HCT116 (cell line): ENCODE measurements at regions of chr12 and their contacts with region 1.

Region 1: DNA sequence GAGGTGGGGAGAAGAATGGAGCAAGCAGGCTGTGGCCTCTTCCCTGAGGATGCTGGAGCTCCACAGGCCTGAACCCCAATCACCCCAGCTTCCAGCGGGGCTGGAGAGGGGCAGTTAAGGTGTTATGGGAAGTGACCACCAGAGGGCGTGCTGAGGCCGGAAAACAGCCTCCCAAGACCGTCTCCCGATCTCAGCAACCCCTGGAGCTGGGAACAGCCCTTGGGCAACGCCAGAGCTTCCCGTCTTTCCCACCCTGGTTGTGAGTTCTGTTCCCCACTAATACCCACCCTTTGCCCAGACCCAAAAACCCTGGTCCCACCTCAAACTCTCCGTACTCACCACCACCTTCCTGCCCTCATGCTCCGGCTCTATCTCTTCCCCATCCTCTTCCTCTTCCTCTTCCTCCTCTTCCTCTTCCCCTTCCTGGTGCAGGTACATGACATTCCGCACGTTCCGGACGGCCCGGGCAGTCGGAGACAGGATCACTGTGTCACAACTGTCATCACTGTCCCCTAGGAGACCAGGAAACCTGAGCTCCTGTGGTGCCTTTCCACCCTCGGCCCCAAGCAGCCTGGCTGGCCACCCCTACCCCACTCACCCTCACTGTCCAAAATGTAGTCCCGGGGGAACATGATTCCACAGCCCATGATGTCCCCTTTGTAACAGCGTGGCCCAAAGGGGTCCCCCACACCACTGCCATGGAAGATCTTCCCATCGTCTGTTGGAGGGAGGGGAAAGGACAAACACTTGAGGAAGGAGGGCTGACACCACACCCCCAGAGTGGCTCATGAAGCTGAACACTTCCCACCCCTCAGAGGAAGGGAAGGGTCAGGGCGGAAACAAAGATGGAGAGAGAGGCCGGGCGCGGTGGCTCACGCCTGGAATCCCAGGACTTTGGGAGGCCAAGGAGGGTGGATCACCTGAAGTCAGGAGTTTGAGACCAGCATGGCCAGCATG is 12.9 kb downstream of the SPRYD3 start:
- DNase-seq: peak; percentile 60
- ATAC-seq: peak; percentile 73
- H3K4me3 ChIP-seq: peak overlapping the region in 1 of 2 experiments; percentile 18; a peak in 2 of 4 replicates
- H3K27ac ChIP-seq: peak overlapping the region; percentile 67
- H3K4me1 ChIP-seq: peaks cover 18 to 52% of the 10 kb centered on the region in 2 experiments
- H3K27me3 ChIP-seq: no peaks in the 10 kb centered on the region
- CTCF ChIP-seq: peak; percentile 76 to 82 (median 82)
- POLR2A ChIP-seq: no peak
- RAD21 ChIP-seq: peak; percentile 97

Region 2: GRCh38 chr12:51773145-51773867 is 1292.9 kb before region 1 on chr12:
- CTCF ChIA-PET with region 1: no interaction called
- POLR2A ChIA-PET with region 1: no interaction called
- RAD21 ChIA-PET with region 1: no interaction called
- intact Hi-C with region 1: no loop called
- DNase-seq: peak; percentile 10
- ATAC-seq: no peak
- H3K4me3 ChIP-seq: no peak overlapping the region
- H3K27ac ChIP-seq: no peak overlapping the region
- H3K4me1 ChIP-seq: peaks cover 2 to 8% of the 10 kb centered on the region in 2 experiments; a peak in 2 of 4 replicates
- H3K27me3 ChIP-seq: no peaks in the 10 kb centered on the region
- CTCF ChIP-seq: no peak
- POLR2A ChIP-seq: no peak
- RAD21 ChIP-seq: no peak

Region 3: DNA sequence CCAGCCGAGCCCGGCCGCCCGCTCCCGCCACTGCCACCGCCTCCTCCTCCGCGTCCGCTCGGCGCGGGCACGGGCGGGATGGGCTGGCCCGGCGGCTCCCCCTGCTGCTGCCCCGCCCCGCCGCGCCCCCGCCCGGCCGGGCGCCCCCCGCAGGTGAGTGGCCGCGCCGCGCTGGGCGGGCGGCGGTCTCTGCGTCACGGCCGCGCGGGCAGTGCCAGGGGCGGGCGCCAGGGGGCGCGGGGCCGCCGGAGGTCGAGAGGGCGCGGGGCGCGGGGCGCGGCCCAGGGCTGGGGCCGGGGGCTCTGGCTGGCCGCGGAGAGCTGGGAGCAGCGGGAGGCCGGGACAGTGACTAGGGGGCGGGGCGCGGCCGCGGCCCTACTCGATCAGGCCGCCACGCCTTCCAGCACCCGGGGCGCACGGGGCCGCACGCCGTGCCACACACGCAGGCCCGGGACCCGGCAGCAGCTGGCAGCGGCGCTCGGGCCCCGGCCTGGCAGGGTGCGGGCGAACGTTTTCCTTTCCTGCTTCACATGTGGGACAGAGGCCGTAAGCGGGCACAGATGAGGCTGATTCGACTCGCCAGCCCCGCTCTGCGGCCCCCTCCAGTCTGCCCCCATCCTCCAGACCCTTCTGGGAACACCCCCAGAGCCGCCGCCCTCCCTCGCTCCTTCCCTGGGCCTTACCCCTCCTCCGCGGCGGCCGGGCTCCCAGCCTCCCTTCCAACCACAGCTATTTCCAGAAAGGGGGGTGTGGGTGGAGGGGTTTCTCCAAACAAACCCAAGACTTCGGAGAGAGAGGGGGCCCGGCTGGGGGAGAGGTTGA is 18.8 kb before region 1 on chr12:
- CTCF ChIA-PET with region 1: interaction called, 36 read pairs
- POLR2A ChIA-PET with region 1: interaction called, 4 read pairs
- RAD21 ChIA-PET with region 1: interaction called, 5 to 7 read pairs
- intact Hi-C with region 1: no loop called
- DNase-seq: no peak
- ATAC-seq: peak; percentile 60
- H3K4me3 ChIP-seq: peak overlapping the region; percentile 81 to 83
- H3K27ac ChIP-seq: peak overlapping the region; percentile 97
- H3K4me1 ChIP-seq: peaks cover 66 to 89% of the 10 kb centered on the region in 2 experiments
- H3K27me3 ChIP-seq: no peaks in the 10 kb centered on the region
- CTCF ChIP-seq: no peak
- POLR2A ChIP-seq: peak; percentile 24
- RAD21 ChIP-seq: no peak

Region 4: DNA sequence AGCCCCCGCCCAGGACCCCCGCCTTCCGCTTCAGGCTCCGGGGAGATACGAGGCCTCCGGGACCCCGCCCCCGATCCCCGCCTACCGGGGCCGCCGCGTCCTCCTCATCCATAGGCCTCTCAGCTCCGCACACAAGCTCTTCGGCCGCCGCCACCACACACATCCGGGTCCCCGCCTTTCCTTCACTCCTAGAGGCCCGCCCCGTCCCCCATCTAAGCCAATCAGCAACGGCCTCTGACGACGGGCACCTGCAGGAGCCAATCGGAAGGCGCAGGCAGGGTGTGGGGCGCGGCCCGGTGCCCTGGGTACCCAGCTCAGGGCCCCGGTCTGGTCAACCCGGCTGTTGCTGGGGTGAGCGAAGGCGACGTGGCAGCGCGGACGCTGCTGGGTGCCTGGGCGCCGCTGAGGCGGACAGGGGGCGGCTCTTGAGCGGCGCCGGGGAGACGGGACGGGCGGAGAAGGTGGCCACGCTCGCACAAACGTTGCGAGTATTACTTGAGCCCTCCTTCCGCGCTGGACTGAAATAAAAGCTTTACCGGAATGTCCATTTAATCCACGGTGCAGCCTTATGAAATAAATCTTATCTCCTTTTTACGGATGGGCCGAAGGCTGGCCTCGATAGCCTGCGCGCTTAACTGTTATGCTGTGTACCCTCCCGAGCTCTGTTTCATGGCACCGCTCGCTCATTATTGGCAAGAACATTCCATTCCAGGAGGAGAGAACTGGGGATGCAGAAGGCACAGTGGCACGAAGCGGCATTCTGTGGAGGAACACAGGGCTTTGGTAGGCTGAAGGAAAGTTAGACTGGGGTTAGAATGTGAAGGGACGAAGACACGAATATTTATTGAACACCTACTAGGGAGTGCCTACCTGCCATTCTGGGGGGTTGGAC is 13.2 kb after region 1 on chr12 and contains the start of gene SPRYD3:
- CTCF ChIA-PET with region 1: interaction called, 33 read pairs
- POLR2A ChIA-PET with region 1: interaction called, 9 read pairs
- RAD21 ChIA-PET with region 1: interaction called, 3 to 6 read pairs
- intact Hi-C with region 1: no loop called
- DNase-seq: peak; percentile 89
- ATAC-seq: peak; percentile 98
- H3K4me3 ChIP-seq: peak within 1 kb of the TSS; percentile 67 to 81
- H3K27ac ChIP-seq: peak within 1 kb of the TSS; percentile 72
- H3K4me1 ChIP-seq: peaks cover 9 to 25% of the 10 kb centered on the region in 2 experiments
- H3K27me3 ChIP-seq: no peaks in the 10 kb centered on the region
- CTCF ChIP-seq: no peak
- POLR2A ChIP-seq: peak; percentile 83
- RAD21 ChIP-seq: no peak
- total RNA-seq, gene SPRYD3: 47.5 TPM

Region 5: GRCh38 chr12:53159195-53159839 is 93.1 kb after region 1 on chr12:
- CTCF ChIA-PET with region 1: interaction called, 23 read pairs
- POLR2A ChIA-PET with region 1: no interaction called
- RAD21 ChIA-PET with region 1: interaction called, 3 to 8 read pairs
- intact Hi-C with region 1: loop called (anchors 1 kb)
- DNase-seq: peak; percentile 72
- ATAC-seq: peak; percentile 96
- H3K4me3 ChIP-seq: peak overlapping the region; percentile 16 to 30; a peak in 3 of 4 replicates
- H3K27ac ChIP-seq: peak overlapping the region; percentile 3; the same call in 1 of the 2 replicates
- H3K4me1 ChIP-seq: peaks cover 3 to 15% of the 10 kb centered on the region in 2 experiments; a peak in 3 of 4 replicates
- H3K27me3 ChIP-seq: no peaks in the 10 kb centered on the region
- CTCF ChIP-seq: peak; percentile 94 to 100 (median 99)
- POLR2A ChIP-seq: no peak
- RAD21 ChIP-seq: peak; percentile 77

Region 6: GRCh38 chr12:53190108-53190729 is 124.0 kb after region 1 on chr12:
- CTCF ChIA-PET with region 1: interaction called, 17 read pairs
- POLR2A ChIA-PET with region 1: interaction called, 3 read pairs
- RAD21 ChIA-PET with region 1: interaction called, 3 to 4 read pairs
- intact Hi-C with region 1: loop called (anchors 1 kb)
- DNase-seq: peak; percentile 23
- ATAC-seq: peak; percentile 97
- H3K4me3 ChIP-seq: no peak overlapping the region
- H3K27ac ChIP-seq: no peak overlapping the region
- H3K4me1 ChIP-seq: peaks cover 4 to 6% of the 10 kb centered on the region in 2 experiments; a peak in 2 of 4 replicates
- H3K27me3 ChIP-seq: no peaks in the 10 kb centered on the region
- CTCF ChIP-seq: peak; percentile 63 to 96 (median 88)
- POLR2A ChIP-seq: no peak
- RAD21 ChIP-seq: peak; percentile 54

Region 7: DNA sequence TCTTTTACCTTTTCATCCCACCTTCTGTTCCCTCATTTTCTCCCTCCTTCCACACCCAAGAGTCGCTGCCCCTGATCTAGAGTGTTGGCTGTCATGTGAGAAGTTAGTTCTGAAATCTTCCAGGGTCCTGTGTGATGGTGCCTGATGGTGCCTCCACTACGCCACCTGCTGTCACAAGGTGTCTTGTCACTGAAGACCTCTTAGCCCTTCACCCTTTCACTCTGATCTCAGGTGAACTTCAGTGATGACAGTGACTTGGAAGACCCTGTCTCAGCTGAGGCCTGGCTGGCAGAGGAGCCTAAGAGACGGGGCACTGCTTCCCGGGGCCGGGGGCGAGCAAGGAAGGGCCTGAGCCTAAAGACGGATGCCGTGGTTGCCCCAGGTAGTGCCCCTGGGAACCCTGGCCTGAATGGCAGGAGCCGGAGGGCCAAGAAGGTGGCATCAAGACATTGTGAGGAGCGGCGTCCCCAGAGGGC is 221.5 kb after region 1 on chr12:
- CTCF ChIA-PET with region 1: no interaction called
- POLR2A ChIA-PET with region 1: no interaction called
- RAD21 ChIA-PET with region 1: no interaction called
- intact Hi-C with region 1: loop called (anchors 10 kb)
- DNase-seq: no peak
- ATAC-seq: peak; percentile 89
- H3K4me3 ChIP-seq: no peak overlapping the region
- H3K27ac ChIP-seq: no peak overlapping the region
- H3K4me1 ChIP-seq: no peaks in the 10 kb centered on the region
- H3K27me3 ChIP-seq: no peaks in the 10 kb centered on the region
- CTCF ChIP-seq: peak; percentile 73 to 80 (median 80)
- POLR2A ChIP-seq: no peak
- RAD21 ChIP-seq: peak; percentile 80

Region 8: DNA sequence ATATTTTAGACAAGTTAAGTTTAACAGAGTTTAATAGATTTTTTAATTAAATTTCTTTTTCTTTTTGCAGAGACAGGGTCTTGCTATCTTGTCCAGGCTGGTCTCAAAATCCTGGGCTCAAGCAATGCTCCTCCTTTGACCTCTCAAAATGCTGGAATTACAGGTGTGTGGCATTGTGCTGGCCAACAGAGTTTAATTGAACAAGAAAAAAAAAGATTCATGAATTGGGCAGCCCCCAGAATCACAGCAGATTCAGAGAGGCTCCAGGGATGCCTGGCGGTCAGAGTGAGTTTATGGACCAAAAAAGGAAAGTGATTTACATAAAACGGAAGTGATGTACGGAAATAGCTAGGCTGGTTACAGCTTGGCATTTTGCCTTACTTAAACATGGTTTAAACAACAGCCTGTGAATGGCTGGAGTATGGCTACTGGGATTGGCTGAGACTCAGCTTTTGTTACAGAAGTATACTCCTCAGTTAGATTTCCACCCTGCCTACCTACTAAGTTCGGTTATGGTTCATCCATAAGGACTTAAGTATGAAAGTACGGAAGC is 1932.8 kb after region 1 on chr12:
- CTCF ChIA-PET with region 1: no interaction called
- POLR2A ChIA-PET with region 1: no interaction called
- RAD21 ChIA-PET with region 1: no interaction called
- intact Hi-C with region 1: no loop called
- DNase-seq: no peak
- ATAC-seq: no peak
- H3K4me3 ChIP-seq: no peak overlapping the region
- H3K27ac ChIP-seq: no peak overlapping the region
- H3K4me1 ChIP-seq: no peaks in the 10 kb centered on the region
- H3K27me3 ChIP-seq: peaks cover 83% of the 10 kb centered on the region
- CTCF ChIP-seq: no peak
- POLR2A ChIP-seq: no peak
- RAD21 ChIP-seq: no peak